Psoas muscle (tissue), 8 donors: ENCODE measurements at regions of chr2 and their contacts with region 1.

Region 1: DNA sequence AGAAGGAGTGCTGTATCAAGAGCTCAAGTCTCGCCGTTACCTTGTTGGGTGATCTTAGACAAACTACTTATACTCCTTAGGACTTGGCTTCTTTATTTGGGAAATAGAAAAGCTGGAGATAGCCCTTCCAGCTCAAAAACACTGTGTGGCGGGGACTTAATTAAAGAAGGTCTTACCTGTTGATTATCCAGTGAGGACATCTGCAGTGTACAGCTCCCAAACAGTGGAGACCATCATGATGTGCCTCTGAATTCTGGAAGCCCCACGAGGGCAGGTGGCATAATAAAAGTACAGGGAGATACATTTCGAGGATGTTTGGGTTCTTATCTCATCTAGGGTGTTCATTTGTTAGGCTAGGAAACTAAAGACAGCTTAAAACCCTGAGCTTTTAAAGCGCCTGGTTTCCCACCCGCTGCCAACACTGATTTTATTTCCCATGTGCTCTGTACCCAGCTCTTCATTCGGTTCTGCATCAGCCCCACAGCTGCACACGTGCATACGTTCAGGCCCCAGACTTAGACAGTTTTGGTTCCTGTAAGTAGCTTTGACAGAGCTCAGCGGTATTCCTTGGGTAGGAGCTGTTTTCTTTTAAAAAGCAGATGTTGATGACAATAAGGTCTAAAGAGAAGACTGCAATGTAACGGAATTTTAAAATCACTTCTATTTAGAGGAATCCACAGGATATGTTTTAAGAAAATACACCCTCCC is 80.5 kb upstream of the SIX2 start:
- DNase-seq: no peak
- ATAC-seq: no peak
- H3K4me3 ChIP-seq: no peak overlapping the region
- H3K27ac ChIP-seq: no peak overlapping the region
- H3K4me1 ChIP-seq: no peaks in the 10 kb centered on the region
- H3K27me3 ChIP-seq: no peaks in the 10 kb centered on the region
- CTCF ChIP-seq: no peak

Region 2: DNA sequence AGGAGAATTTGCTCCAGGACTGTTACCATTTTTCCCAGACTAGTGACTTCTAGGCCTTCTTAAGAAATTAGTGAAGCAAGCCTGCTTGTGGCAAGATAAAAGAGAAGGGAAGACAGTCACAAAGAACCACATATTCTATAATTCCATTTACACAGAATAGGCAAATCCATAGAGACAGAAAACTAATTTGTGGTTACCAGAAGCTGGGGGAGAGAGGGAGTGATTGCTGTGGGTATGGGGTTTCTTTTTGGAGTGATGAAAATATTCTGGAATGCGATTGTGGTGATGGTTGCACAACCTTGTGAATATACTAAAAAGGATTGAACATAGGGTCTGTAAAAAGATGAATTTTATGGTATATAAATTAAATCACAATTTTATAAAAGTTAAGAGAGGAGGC is 42.9 kb before region 1 on chr2:
- intact Hi-C with region 1: loop called in 1 of 2 experiments (anchors 10 kb)
- DNase-seq: no peak
- ATAC-seq: no peak
- H3K4me3 ChIP-seq: no peak overlapping the region
- H3K27ac ChIP-seq: no peak overlapping the region
- H3K4me1 ChIP-seq: no peaks in the 10 kb centered on the region
- H3K27me3 ChIP-seq: peaks cover 0 to 7% (median 0%) of the 10 kb centered on the region in 3 donors
- CTCF ChIP-seq: no peak

Region 3: GRCh38 chr2:45353879-45354278 is 264.2 kb after region 1 on chr2:
- intact Hi-C with region 1: loop called in 1 of 2 experiments (anchors 10 kb)
- DNase-seq: no peak
- ATAC-seq: no peak
- H3K4me3 ChIP-seq: no peak overlapping the region
- H3K27ac ChIP-seq: no peak overlapping the region
- H3K4me1 ChIP-seq: no peaks in the 10 kb centered on the region
- H3K27me3 ChIP-seq: no peaks in the 10 kb centered on the region
- CTCF ChIP-seq: no peak